Sigmoid colon (tissue), 7 donors: ENCODE measurements at regions of chr4 and their contacts with region 1.

Region 1: GRCh38 chr4:74189331-74190043 is 31.6 kb downstream of the MTHFD2L start:
- DNase-seq: no peak
- H3K4me3 ChIP-seq: no peak overlapping the region
- H3K27ac ChIP-seq: no peak overlapping the region
- H3K4me1 ChIP-seq: no peaks in the 10 kb centered on the region
- H3K27me3 ChIP-seq: no peaks in the 10 kb centered on the region
- CTCF ChIP-seq: peak in 3 of 4 experiments; percentile 21 to 33 (median 32)
- EP300 ChIP-seq: no peak
- POLR2A ChIP-seq: no peak

Region 2: GRCh38 chr4:74109116-74109869 is 80.2 kb before region 1 on chr4:
- intact Hi-C with region 1: no loop called
- DNase-seq: no peak
- H3K4me3 ChIP-seq: no peak overlapping the region
- H3K27ac ChIP-seq: peak overlapping the region in 3 of 4 donors; percentile 29 to 50 (median 29)
- H3K4me1 ChIP-seq: peaks cover 0 to 10% (median 0%) of the 10 kb centered on the region in 4 donors
- H3K27me3 ChIP-seq: no peaks in the 10 kb centered on the region
- CTCF ChIP-seq: no peak
- EP300 ChIP-seq: no peak
- POLR2A ChIP-seq: no peak

Region 3: DNA sequence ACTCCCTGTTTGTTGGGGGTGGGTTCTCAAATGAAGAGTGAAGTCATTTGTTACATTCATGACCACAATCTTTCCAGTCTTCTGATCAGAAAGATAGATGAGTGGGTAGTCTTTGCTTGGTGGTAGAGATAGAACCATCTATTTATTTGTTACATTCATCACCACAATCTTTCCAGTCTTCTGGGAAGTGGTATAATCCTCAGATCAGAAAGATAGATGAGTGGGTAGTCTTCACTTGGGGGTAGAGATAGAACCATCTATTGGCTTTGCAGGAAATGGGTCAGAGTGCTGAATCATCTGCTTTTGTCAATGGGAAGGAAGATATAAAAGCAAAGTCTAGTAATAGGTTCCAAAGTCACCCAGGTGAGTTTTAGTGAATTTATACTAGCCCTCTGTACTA is 54.6 kb after region 1 on chr4:
- intact Hi-C with region 1: no loop called
- DNase-seq: no peak
- H3K4me3 ChIP-seq: no peak overlapping the region
- H3K27ac ChIP-seq: no peak overlapping the region
- H3K4me1 ChIP-seq: no peaks in the 10 kb centered on the region
- H3K27me3 ChIP-seq: no peaks in the 10 kb centered on the region
- CTCF ChIP-seq: no peak
- EP300 ChIP-seq: no peak
- POLR2A ChIP-seq: no peak

Region 4: DNA sequence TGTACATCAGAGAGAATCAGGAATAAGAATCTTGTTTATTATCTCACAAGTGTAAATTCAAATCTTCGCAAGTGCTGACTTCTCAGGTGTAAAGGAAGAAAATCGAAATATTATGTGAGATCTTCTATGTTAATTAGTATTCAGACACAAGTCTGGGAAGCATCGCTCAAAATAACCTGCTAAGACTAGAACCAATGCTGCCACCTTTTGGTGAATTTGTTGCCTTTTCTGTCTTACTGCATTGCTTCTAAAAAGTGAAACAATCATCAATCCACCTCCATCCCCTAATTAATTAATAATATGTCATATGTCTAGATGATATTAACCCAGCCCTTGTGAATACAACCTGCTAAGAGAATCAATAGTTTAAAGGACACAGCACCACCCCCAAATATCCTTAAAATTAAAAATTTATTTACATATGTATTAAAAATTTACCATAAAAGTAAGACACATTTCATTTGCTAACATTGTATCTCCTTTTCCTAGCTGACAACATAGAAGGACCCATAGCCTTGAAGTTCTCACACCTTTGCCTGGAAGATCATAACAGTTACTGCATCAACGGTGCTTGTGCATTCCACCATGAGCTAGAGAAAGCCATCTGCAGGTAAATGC is 122.3 kb after region 1 on chr4:
- intact Hi-C with region 1: loop called (anchors 10 kb)
- DNase-seq: no peak
- H3K4me3 ChIP-seq: no peak overlapping the region
- H3K27ac ChIP-seq: no peak overlapping the region
- H3K4me1 ChIP-seq: no peaks in the 10 kb centered on the region
- H3K27me3 ChIP-seq: no peaks in the 10 kb centered on the region
- CTCF ChIP-seq: peak in 2 of 4 experiments; percentile 20 to 34
- EP300 ChIP-seq: no peak
- POLR2A ChIP-seq: no peak